ENCODE measurements at regions of chr2 and their contacts with region 1.

Region 1: DNA sequence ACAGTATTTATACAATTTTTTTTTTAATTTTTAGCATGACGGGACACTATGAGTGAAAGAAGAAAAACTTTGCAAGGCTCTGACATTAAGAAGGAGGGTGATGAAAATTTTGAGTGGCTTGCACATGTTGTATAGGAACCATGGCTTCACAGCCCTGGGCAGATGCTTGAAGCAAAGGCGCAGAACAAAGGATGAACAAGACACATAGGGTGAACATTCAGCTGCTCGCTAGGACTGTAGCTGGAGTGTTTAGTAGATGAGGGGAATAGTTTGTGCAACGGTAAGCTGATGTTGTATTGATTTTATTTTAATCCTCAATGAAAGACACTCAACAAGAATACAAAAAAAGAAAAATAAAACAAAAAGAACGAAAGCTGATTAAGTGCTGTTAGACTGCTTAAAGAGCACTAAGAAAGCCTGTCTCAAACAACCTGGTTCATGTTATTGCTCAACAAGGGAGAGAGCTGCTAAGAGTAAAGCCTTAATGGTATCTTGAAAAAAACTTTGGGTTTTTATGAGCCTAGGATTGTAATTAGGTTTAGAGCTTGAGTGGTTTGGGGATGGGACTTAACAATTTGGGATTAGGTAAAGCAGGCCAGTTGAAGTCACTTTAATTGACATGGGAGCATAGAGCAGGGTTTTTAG is 41.2 kb upstream of the GCFC2 start:
- DNase-seq: no peak
- H3K4me3 Mint-ChIP-seq: no peak overlapping the region
- H3K27ac Mint-ChIP-seq: no peak overlapping the region
- H3K4me1 Mint-ChIP-seq: peaks cover 5% of the 10 kb centered on the region
- H3K27me3 Mint-ChIP-seq: no peaks in the 10 kb centered on the region
- CTCF ChIP-seq: no peak

Region 2: DNA sequence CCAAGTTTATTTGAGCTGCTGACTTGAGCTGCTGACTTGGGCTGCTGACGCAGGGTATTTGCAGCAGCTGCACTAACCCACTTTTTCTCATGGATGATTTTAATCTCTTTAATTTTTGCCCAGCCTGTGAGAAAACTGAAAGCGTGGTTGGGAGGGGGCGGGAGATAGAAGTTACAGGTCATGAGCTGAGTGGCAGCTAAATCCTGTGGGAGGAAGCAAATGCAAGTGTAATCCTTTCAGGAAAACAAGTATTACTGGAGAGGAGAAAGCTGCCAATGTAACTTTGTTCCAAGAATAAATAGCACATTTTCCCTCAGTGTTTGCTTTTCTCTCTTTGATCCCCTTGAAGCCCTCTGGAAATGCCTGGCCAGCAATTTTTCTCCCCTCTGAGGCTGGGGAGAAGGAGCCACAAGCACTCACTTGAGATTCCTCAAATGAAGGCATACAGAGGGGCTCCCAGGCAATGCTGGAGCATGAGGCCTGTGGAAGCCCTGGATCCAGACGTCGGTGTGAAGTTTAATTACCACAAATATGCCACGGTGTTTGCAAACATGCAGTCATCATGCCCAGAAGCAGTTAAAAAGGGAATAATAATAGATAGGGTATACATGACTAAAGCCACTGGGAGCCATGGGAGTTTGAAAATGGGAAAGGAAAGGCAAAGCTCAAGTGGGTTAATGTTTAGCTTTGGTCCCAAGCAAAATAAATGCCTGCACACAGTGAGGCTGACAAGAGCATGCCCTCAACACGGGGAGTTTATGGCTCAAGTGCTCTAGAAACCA is 180.8 kb before region 1 on chr2:
- CTCF ChIA-PET with region 1: no interaction called
- POLR2A ChIA-PET with region 1: no interaction called
- intact Hi-C with region 1: no loop called
- DNase-seq: no peak
- H3K4me3 Mint-ChIP-seq: no peak overlapping the region
- H3K27ac Mint-ChIP-seq: no peak overlapping the region
- H3K4me1 Mint-ChIP-seq: peaks cover 21% of the 10 kb centered on the region
- H3K27me3 Mint-ChIP-seq: no peaks in the 10 kb centered on the region
- CTCF ChIP-seq: no peak

Region 3: DNA sequence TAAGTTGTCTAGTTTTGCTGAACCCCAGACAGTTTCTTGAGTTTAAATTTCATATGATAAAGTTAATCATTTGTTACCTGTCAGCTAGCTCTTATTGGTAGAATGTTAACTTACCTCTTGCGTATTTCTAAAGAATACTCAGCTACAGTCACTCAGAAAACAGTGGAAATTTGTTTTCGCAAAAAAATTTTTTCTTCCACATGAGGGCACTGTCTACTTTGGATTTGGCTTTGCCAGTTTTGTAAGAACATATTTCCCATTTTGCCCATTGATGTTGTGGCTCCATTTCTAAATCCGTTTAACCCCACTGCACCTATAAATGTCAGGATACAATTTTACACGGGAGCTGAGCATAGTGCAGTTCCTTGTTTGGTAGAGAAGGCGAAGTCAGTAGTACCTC is 22.1 kb before region 1 on chr2:
- CTCF ChIA-PET with region 1: interaction called, 15 read pairs
- POLR2A ChIA-PET with region 1: no interaction called
- intact Hi-C with region 1: no loop called
- DNase-seq: peak; percentile 22
- H3K4me3 Mint-ChIP-seq: no peak overlapping the region
- H3K27ac Mint-ChIP-seq: no peak overlapping the region
- H3K4me1 Mint-ChIP-seq: no peaks in the 10 kb centered on the region
- H3K27me3 Mint-ChIP-seq: peaks cover 23% of the 10 kb centered on the region
- CTCF ChIP-seq: peak; percentile 29

Region 4: GRCh38 chr2:75892490-75892889 is 140.5 kb after region 1 on chr2:
- CTCF ChIA-PET with region 1: no interaction called
- POLR2A ChIA-PET with region 1: no interaction called
- intact Hi-C with region 1: no loop called
- DNase-seq: no peak
- H3K4me3 Mint-ChIP-seq: no peak overlapping the region
- H3K27ac Mint-ChIP-seq: no peak overlapping the region
- H3K4me1 Mint-ChIP-seq: no peaks in the 10 kb centered on the region
- H3K27me3 Mint-ChIP-seq: peaks cover 14% of the 10 kb centered on the region
- CTCF ChIP-seq: no peak

Region 5: DNA sequence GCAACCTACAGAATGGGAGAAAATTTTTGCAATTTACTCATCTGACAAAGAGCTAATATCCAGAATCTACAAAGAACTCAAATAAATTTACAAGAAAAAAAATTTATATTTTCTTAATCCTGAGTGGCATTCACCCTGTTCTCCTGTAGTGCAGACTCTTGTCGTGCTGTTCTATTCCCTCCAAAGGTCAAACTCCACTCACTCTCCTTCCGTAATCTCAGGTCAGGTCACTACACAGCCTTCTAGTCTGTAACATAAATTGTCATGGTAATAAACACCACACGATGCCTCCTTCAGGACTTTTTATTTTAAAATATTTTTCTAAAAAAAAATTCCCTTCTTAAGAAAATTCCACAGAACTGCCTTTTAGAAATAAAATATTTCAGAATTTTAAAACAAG is 376.7 kb after region 1 on chr2:
- CTCF ChIA-PET with region 1: no interaction called
- POLR2A ChIA-PET with region 1: no interaction called
- intact Hi-C with region 1: no loop called
- DNase-seq: no peak
- H3K4me3 Mint-ChIP-seq: no peak overlapping the region
- H3K27ac Mint-ChIP-seq: no peak overlapping the region
- H3K4me1 Mint-ChIP-seq: no peaks in the 10 kb centered on the region
- H3K27me3 Mint-ChIP-seq: no peaks in the 10 kb centered on the region
- CTCF ChIP-seq: no peak

Region 6: GRCh38 chr2:76318848-76319360 is 567.0 kb after region 1 on chr2:
- CTCF ChIA-PET with region 1: no interaction called
- POLR2A ChIA-PET with region 1: no interaction called
- intact Hi-C with region 1: no loop called
- DNase-seq: no peak
- H3K4me3 Mint-ChIP-seq: no peak overlapping the region
- H3K27ac Mint-ChIP-seq: no peak overlapping the region
- H3K4me1 Mint-ChIP-seq: no peaks in the 10 kb centered on the region
- H3K27me3 Mint-ChIP-seq: peaks cover 52% of the 10 kb centered on the region
- CTCF ChIP-seq: no peak